PC-9 (cell line): ENCODE measurements at regions of chr1 and their contacts with region 1.

Region 1: DNA sequence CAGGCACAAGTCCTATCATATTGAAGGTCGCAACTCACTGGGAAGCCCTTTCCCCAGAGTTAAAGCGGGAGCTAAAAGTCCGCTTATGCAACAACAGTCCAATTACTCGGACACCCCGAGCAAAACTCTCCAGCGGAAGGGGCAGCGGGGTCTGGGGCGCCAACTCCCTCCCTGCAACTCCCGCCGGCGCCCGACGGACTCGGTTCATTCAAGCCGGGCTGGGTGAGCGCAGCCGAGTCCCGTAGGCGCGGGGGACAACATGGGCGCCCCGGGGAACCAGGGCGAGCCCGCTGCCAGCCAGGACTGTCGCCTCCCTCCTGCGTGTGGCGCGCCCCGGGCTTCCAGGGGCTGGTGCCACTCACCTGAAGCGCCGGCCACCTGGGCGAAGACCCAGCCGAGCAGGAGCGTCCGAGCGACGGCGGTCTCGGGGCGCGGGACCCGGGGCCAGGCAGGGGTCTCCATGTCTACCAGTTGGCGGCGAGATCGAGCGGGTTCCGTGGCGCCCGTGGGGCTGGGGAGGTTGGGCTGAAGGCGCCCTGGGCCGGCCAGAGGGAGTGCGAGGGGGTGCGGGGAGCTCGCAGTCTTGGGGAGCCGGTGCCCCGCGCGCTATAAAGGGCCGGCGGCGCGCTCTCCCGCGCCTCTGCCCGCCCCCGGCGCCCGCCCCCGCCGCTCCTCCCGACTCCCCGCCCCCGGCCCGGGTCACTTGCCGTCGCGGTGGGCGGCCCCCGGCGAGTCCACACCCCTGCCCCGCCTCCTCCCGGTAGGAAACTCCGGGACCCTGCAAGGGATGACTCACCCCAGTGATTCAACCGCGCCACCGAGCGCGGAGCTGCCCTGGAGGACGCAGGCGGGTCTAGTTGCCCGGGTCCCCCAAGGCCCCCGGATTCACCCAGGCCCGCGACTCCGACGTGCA is at the start of gene F3:
- DNase-seq: peak; percentile 93 to 98
- H3K4me3 ChIP-seq: peak within 1 kb of the TSS; percentile 80
- H3K27ac ChIP-seq: peak within 1 kb of the TSS; percentile 87
- H3K4me1 ChIP-seq: peaks cover 67% of the 10 kb centered on the region
- H3K27me3 ChIP-seq: no peaks in the 10 kb centered on the region
- CTCF ChIP-seq: no peak; the same call in 1 of the 2 replicates
- total RNA-seq, gene F3: 335 and 434 TPM in 2 replicates

Region 2: DNA sequence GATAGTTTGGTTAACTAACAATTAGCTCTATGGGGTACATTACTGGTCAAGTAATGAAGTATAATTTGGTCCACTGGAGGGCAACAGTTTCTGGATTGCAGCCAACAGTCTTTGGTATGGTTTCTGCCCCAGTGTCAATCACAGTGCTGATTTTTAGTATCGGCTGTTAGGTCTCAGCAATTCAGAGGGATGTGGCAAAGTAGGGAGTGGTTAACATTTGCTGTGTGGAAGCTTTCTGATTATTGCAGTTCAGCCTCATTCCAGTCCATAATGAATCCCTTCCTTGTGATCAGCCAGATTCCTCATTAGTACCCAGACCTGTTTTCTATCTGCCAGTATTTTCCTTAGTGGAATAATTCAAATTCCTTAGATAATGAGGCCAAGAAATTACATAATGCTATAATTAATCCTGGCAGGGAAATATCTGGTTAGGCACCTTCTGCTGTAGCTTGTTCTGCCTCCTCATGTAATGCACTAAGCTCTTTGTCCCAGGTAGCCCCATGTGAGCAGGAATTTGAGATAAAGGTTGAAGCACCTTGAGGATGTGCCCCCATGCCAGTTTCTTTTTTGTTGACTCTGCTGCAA is 13.9 kb before region 1 on chr1:
- CTCF ChIA-PET with region 1: interaction called, 4 read pairs
- POLR2A ChIA-PET with region 1: interaction called, 26 read pairs
- intact Hi-C with region 1: loop called (anchors 1 kb)
- DNase-seq: peak; percentile 62 to 99
- H3K4me3 ChIP-seq: no peak overlapping the region
- H3K27ac ChIP-seq: peak overlapping the region; percentile 71
- H3K4me1 ChIP-seq: peaks cover 60% of the 10 kb centered on the region
- H3K27me3 ChIP-seq: no peaks in the 10 kb centered on the region
- CTCF ChIP-seq: 0 out of 2 replicates have a peak, but pooled peaks have one; percentile 40

Region 3: DNA sequence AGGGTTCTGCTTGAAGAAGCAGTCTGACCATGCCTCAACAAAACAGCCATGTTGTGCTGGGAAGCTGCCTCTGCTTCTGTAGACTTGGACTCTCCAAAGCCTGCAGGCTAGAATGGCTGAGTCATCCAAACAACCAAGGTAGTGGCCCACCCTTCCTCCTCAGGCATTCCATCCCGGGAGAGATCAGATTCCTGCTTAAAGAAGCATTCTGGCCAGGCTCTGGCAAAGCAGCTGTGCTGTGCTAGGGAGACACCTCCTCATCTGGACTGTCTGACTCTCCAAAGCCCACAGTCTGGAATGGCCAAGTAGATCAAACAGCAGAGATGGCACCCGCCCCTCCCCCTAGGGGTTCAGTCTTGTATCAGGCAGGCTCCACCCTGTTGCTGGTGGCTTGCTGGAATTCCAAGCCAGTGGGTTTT is 38.5 kb after region 1 on chr1:
- CTCF ChIA-PET with region 1: no interaction called
- POLR2A ChIA-PET with region 1: interaction called, 3 read pairs
- intact Hi-C with region 1: loop called (anchors 1 kb)
- DNase-seq: peak; percentile 88 to 98
- H3K4me3 ChIP-seq: no peak overlapping the region
- H3K27ac ChIP-seq: peak overlapping the region; percentile 66
- H3K4me1 ChIP-seq: peaks cover 35% of the 10 kb centered on the region
- H3K27me3 ChIP-seq: no peaks in the 10 kb centered on the region
- CTCF ChIP-seq: no peak

Region 4: GRCh38 chr1:94617134-94617805 is 75.8 kb after region 1 on chr1:
- CTCF ChIA-PET with region 1: no interaction called
- POLR2A ChIA-PET with region 1: interaction called, 34 read pairs
- intact Hi-C with region 1: loop called (anchors 1 kb)
- DNase-seq: peak; percentile 59 to 95
- H3K4me3 ChIP-seq: no peak overlapping the region; the same call in 1 of the 2 replicates
- H3K27ac ChIP-seq: peak overlapping the region; percentile 76
- H3K4me1 ChIP-seq: peaks cover 71% of the 10 kb centered on the region
- H3K27me3 ChIP-seq: no peaks in the 10 kb centered on the region
- CTCF ChIP-seq: no peak

Region 5: DNA sequence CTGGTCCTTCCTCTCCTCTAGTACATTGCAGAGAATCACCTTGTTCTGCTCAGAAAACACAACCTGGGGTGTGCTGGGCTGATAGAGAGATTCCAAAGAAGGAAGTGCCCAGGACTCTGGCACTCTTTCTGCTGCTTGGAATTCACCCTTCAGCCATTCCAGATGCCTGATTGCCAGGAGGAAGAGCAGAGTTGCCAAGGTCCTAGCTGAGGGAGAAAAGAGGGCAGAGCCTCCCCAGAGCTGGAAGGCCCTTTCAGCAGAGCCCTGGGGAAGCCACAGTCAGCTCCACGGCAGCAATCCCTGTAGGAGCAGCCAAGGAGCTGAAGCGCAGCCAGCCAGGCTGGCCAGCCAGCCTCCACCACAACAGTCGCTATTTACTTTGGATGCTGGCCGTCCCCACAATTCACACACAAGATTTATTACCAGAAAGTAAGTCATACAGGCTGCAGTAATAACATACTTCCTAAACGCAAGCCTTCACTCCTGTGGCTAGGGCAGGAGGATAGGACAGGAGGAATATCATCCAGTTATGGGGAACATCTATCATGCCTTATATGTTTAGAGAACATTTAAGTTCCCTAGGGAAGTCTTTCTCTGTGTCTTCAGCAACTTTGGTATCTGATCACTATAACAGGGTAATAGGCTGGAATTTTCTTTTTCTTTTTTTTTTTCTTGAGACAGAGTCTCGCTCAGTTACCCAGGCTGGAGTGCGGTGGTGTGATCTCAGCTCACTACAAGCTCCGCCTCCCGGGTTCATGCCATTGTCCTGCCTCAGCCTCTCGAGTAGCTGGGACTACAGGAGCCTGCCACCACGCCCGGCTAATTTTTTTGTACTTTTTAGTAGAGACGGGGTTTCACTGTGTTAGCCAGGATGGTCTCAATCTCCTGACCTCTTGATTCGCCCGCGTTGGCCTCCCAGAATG is 242.2 kb after region 1 on chr1:
- CTCF ChIA-PET with region 1: no interaction called
- POLR2A ChIA-PET with region 1: interaction called, 5 read pairs
- intact Hi-C with region 1: loop called (anchors 5 kb)
- DNase-seq: peak; percentile 87 to 94
- H3K4me3 ChIP-seq: peak overlapping the region; percentile 10; the same call in 1 of the 2 replicates
- H3K27ac ChIP-seq: peak overlapping the region; percentile 91
- H3K4me1 ChIP-seq: peaks cover 36% of the 10 kb centered on the region
- H3K27me3 ChIP-seq: no peaks in the 10 kb centered on the region
- CTCF ChIP-seq: no peak